ENCODE measurements at regions of chr3 and their contacts with region 1.

Region 1: DNA sequence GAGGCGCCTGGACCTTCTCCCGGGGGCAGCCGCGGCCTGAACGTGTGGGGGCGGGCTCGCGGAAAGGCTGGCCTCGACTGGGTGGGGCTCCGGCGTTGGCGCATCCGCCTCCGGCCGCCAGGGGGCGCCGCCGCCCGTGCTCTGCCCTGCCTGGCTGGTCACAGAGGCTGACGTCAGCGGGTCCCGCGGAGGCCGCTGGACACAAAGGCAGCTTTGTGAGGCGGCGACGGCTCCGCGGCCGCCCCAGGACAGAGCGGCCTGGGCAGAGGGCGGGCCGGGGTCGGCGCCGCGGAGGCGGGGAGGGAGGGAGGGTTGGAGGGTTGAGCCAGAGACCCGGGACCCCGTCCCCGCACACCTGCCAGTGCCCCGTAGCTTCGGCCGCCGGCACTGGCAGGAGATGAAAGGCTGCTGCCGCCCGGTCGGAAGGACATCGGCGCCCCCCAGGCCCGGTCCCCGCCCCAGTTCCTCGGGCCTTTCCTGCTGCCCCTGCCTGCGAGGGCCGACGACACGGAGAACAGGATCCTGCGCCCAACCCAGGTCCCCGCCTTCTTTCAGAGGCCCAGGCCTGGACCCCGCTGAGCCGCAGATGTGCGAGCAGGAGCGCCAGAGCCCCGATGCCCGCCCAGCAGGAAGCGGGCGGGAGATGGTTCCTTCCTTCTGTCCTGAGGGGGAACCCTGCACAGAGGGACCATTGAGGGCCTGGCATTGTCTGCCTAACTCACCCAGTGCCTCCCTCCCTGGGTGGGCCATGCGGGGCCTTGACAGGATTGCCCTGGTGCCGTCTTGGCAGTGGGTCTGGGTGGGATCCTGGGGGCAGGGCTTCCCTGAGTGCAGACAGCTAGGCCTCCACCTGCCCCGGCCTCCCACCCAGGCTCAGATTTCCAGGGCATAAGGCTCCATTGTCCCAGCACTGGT is 8.7 kb upstream of the SEMA3B start:
- DNase-seq: peak; percentile 83
- H3K4me3 Mint-ChIP-seq: peak overlapping the region; percentile 69
- H3K27ac Mint-ChIP-seq: peak overlapping the region; percentile 67
- H3K4me1 Mint-ChIP-seq: peaks cover 3% of the 10 kb centered on the region
- H3K27me3 Mint-ChIP-seq: no peaks in the 10 kb centered on the region

Region 2: GRCh38 chr3:50245831-50246516 is 14.3 kb before region 1 on chr3:
- intact Hi-C with region 1: loop called (anchors 1 kb)
- DNase-seq: peak; percentile 86
- H3K4me3 Mint-ChIP-seq: peak overlapping the region; percentile 82
- H3K27ac Mint-ChIP-seq: peak overlapping the region; percentile 92
- H3K4me1 Mint-ChIP-seq: peaks cover 62% of the 10 kb centered on the region
- H3K27me3 Mint-ChIP-seq: no peaks in the 10 kb centered on the region

Region 3: DNA sequence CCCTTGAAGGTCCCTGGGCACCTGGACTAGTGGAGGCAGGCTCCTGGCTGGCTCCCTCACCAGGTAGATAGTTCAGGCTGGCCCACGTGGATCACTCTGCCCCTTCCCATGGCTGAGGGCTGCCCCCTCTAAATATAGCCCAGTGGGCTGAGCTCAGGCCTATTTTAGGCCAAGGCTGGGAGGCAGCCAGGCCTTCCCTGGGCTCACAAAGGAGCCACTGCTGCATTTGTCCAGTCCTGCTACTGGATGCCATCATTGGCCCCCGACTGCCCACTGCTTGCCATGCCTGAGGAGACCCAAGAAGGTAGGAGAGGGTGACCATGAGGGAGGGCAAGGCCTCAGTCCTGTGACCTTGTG is 18.6 kb after region 1 on chr3 and contains the start of gene LSMEM2:
- intact Hi-C with region 1: no loop called
- DNase-seq: no peak
- H3K4me3 Mint-ChIP-seq: no peak within 1 kb of the TSS
- H3K27ac Mint-ChIP-seq: no peak within 1 kb of the TSS
- H3K4me1 Mint-ChIP-seq: peaks cover 9% of the 10 kb centered on the region
- H3K27me3 Mint-ChIP-seq: peaks cover 31% of the 10 kb centered on the region
- total RNA-seq, gene LSMEM2: not detected in 2 replicates